B cell (primary cell): ENCODE measurements at regions of chr1 and their contacts with region 1.

Region 1: GRCh38 chr1:15603050-15603965 is 13.9 kb upstream of the DDI2 start:
- DNase-seq: peak; percentile 96
- ATAC-seq: peak; percentile 97
- H3K4me3 ChIP-seq: peak overlapping the region; percentile 59 to 95 (median 72)
- H3K4me3 Mint-ChIP-seq: peak overlapping the region; percentile 86
- H3K27ac ChIP-seq: peak overlapping the region; percentile 34 to 80
- H3K27ac Mint-ChIP-seq: peak overlapping the region; percentile 79
- H3K4me1 ChIP-seq: peaks cover 5 to 11% of the 10 kb centered on the region in 2 donors
- H3K4me1 Mint-ChIP-seq: peaks cover 11% of the 10 kb centered on the region
- H3K27me3 ChIP-seq: no peaks in the 10 kb centered on the region
- H3K27me3 Mint-ChIP-seq: no peaks in the 10 kb centered on the region
- CTCF ChIP-seq: no peak

Region 2: DNA sequence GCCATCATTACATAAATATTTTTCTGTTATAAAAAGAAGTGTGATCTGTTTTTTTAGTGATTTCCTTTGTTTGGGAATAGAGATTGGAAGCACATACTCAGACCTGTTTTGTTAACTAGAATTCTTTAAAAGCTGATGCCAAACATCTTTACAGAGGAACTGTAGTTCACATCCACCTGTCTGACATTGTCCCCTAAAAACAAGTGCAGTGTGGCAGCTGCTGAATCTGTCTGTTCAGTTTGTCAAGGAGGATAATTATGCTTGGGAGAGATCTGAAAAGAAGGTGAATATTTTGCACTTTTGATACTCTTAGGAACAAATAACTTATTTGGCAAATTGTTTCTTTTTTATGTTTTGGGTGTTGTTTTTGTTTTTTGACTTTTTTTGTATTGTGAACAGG is 32.0 kb before region 1 on chr1:
- CTCF ChIA-PET with region 1: no interaction called
- POLR2A ChIA-PET with region 1: interaction called, 11 read pairs
- intact Hi-C with region 1: no loop called
- DNase-seq: no peak
- ATAC-seq: no peak
- H3K4me3 ChIP-seq: peak overlapping the region in 2 of 5 experiments; percentile 15 to 16
- H3K4me3 Mint-ChIP-seq: peak overlapping the region; percentile 83
- H3K27ac ChIP-seq: peak overlapping the region; percentile 58 to 66
- H3K27ac Mint-ChIP-seq: peak overlapping the region; percentile 95
- H3K4me1 ChIP-seq: peaks cover 22 to 27% of the 10 kb centered on the region in 2 donors
- H3K4me1 Mint-ChIP-seq: peaks cover 26% of the 10 kb centered on the region
- H3K27me3 ChIP-seq: no peaks in the 10 kb centered on the region
- H3K27me3 Mint-ChIP-seq: no peaks in the 10 kb centered on the region
- CTCF ChIP-seq: no peak

Region 3: GRCh38 chr1:15578921-15579682 is 24.2 kb before region 1 on chr1:
- CTCF ChIA-PET with region 1: no interaction called
- POLR2A ChIA-PET with region 1: interaction called, 10 read pairs
- intact Hi-C with region 1: loop called (anchors 2 kb)
- DNase-seq: peak; percentile 54
- ATAC-seq: peak; percentile 76
- H3K4me3 ChIP-seq: peak overlapping the region in 1 of 5 experiments; percentile 30
- H3K4me3 Mint-ChIP-seq: peak overlapping the region; percentile 74
- H3K27ac ChIP-seq: peak overlapping the region; percentile 75 to 90
- H3K27ac Mint-ChIP-seq: peak overlapping the region; percentile 94
- H3K4me1 ChIP-seq: peaks cover 33 to 44% of the 10 kb centered on the region in 2 donors
- H3K4me1 Mint-ChIP-seq: peaks cover 40% of the 10 kb centered on the region
- H3K27me3 ChIP-seq: no peaks in the 10 kb centered on the region
- H3K27me3 Mint-ChIP-seq: no peaks in the 10 kb centered on the region
- CTCF ChIP-seq: no peak

Region 4: GRCh38 chr1:15584489-15585363 is 18.6 kb before region 1 on chr1 and contains the start of gene AGMAT:
- CTCF ChIA-PET with region 1: interaction called, 3 read pairs
- POLR2A ChIA-PET with region 1: interaction called, 10 read pairs
- intact Hi-C with region 1: loop called (anchors 2 kb)
- DNase-seq: peak; percentile 74
- ATAC-seq: peak; percentile 86
- H3K4me3 ChIP-seq: peak within 1 kb of the TSS in 4 of 5 experiments; percentile 68 to 88 (median 76)
- H3K4me3 Mint-ChIP-seq: peak within 1 kb of the TSS; percentile 87
- H3K27ac ChIP-seq: peak within 1 kb of the TSS; percentile 58 to 78
- H3K27ac Mint-ChIP-seq: peak within 1 kb of the TSS; percentile 84
- H3K4me1 ChIP-seq: peaks cover 14 to 31% of the 10 kb centered on the region in 2 donors
- H3K4me1 Mint-ChIP-seq: peaks cover 21% of the 10 kb centered on the region
- H3K27me3 ChIP-seq: no peaks in the 10 kb centered on the region
- H3K27me3 Mint-ChIP-seq: no peaks in the 10 kb centered on the region
- CTCF ChIP-seq: peak; percentile 54
- total RNA-seq, gene AGMAT: 3.3 and 3.5 TPM in 2 replicates

Region 5: GRCh38 chr1:15617175-15617880 is 14.0 kb after region 1 on chr1 and contains the start of gene DDI2:
- CTCF ChIA-PET with region 1: interaction called, 8 read pairs
- POLR2A ChIA-PET with region 1: interaction called, 16 read pairs
- intact Hi-C with region 1: loop called (anchors 1 kb)
- DNase-seq: peak; percentile 94
- ATAC-seq: peak; percentile 88
- H3K4me3 ChIP-seq: peak within 1 kb of the TSS; percentile 82 to 98 (median 90)
- H3K4me3 Mint-ChIP-seq: peak within 1 kb of the TSS; percentile 91
- H3K27ac ChIP-seq: peak within 1 kb of the TSS; percentile 88 to 92
- H3K27ac Mint-ChIP-seq: peak within 1 kb of the TSS; percentile 88
- H3K4me1 ChIP-seq: peaks cover 26 to 32% of the 10 kb centered on the region in 2 donors
- H3K4me1 Mint-ChIP-seq: peaks cover 35% of the 10 kb centered on the region
- H3K27me3 ChIP-seq: no peaks in the 10 kb centered on the region
- H3K27me3 Mint-ChIP-seq: no peaks in the 10 kb centered on the region
- CTCF ChIP-seq: no peak
- total RNA-seq, gene DDI2: 61.0 and 68.3 TPM in 2 replicates

Region 6: DNA sequence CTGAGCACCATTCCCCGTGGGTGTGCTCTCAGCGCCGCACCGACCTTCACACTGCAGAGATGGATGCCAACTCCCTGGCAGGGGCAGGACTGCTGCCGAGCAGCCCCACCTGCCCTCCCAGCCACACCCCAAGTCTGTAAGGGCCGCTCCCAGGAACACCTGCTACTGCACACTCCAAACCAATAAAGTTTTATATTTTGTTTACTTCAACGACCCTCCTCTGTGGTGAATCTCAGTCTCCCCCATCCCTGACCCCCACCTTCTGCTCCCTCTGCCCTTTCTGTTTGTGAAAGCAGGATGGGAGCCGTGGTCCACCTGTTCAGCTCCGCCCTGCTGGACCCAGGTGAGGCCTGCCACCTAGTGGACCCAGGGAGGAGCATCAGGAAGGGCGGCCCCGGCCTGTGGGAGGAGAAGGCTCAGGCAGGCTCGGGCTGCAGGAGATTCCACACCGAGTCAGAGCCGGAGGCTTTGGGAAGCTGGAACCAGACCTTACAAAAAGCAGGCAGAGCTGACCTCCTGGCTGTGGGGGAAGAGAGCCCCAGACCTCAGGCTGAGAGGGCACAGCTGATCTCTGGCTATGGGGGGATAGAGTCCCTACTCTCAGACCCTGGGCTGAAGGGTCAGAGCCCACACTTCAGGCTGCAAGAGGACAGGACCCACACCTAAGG is 138.0 kb after region 1 on chr1:
- CTCF ChIA-PET with region 1: interaction called, 7 read pairs
- POLR2A ChIA-PET with region 1: no interaction called
- intact Hi-C with region 1: loop called (anchors 2 kb)
- DNase-seq: peak; percentile 79
- ATAC-seq: peak; percentile 91
- H3K4me3 ChIP-seq: no peak overlapping the region
- H3K4me3 Mint-ChIP-seq: no peak overlapping the region
- H3K27ac ChIP-seq: no peak overlapping the region
- H3K27ac Mint-ChIP-seq: no peak overlapping the region
- H3K4me1 ChIP-seq: peaks cover 0 to 7% of the 10 kb centered on the region in 2 donors
- H3K4me1 Mint-ChIP-seq: peaks cover 6% of the 10 kb centered on the region
- H3K27me3 ChIP-seq: no peaks in the 10 kb centered on the region
- H3K27me3 Mint-ChIP-seq: no peaks in the 10 kb centered on the region
- CTCF ChIP-seq: peak; percentile 80